Spleen (tissue), 13 donors: ENCODE measurements at regions of chr15 and their contacts with region 1.

Region 1: DNA sequence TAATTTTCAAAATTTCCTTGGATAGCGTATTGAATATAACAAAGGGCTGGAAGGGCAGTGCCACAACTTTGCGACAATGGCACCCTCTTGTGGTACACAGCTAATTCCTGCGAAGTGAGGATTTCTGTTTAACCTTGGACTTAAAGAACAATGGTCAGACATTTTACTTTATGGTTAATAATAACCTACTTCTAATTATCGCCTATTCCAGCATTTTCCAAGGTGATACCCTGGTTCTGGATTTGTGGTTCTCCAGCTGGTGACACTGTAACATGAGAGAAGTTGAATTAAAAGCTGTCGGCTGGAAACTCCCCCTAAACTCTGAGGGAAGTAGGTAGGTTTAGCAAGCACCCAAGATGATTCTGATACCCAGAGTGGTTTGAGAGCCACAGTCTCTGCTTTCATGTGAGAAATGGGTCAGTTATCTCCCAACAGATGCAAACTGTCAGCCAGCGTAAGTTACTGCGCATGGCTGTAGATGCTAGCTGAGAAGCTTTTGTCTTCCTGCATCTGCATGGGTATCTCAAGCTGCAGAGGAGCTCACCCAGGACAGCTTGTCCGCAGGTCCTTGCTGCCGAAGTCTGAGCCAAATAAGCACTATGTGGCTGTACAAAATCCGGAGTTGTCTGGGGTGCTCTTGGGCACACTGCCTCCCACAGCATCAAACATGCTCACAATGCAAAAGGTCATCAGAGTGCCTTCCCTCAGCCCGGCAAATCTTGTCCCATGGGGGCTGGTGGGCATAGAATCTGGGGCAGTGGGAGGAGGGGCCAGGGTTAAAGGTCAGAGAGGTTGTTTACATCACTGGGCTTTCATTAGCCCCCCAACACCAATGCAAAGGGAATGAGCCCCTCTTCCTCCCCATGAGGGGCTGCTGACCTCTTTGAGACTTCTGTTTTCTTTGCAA is 6.6 kb upstream of the CHSY1 start:
- DNase-seq: peak; percentile 75
- H3K4me3 ChIP-seq: no peak overlapping the region
- H3K27ac ChIP-seq: no peak overlapping the region
- H3K4me1 ChIP-seq: peaks cover 0 to 44% (median 23%) of the 10 kb centered on the region in 6 donors
- H3K27me3 ChIP-seq: no peaks in the 10 kb centered on the region
- CTCF ChIP-seq: peak; percentile 70 to 91 (median 85)
- POLR2A ChIP-seq: no peak

Region 2: DNA sequence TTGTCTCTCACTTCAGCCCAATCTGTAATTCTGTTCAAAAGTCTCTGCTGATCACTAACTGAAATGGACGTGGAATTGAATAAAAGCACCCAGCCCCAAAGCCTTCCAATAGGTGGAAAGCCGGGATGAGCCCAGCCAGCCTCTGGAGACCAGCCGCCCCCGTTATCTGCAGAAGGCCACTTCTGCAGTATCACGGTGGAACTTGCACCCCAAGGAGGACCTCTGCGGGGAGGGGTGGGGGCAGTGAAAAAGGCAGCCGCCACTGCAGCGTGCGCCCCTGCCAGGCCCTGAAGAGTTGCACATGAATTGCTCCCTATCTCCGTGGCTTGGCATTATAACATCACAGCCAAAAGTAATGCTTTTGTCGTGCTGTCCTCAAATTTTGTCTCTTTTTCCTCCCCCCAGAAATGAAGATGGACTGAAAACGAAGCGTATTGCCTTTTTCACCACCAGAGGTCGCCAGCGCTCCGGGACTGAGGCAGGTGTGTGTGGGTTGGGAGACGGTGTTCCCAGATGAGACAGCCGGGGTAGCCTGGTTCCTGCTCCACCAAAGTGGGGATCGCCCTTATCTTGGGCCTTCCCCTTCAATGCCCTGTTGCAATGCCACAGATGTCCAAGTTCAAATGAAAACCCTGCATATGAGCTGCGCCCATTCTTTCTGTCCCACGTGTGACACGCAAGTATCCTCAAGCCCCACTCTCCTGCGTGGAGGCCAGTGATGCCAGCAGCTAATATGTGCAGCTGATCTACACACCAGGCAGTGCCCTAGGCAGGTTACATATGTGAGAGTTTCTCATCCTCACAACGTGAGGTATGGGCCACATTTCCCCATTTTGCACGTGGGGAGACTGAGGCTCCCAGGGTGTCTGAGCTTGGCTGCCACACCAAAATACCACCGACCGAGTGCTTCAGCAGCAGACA is 243.3 kb before region 1 on chr15:
- intact Hi-C with region 1: loop called (anchors 2 kb)
- DNase-seq: peak; percentile 92
- H3K4me3 ChIP-seq: no peak overlapping the region
- H3K27ac ChIP-seq: no peak overlapping the region
- H3K4me1 ChIP-seq: peaks cover 4 to 29% (median 21%) of the 10 kb centered on the region in 6 donors
- H3K27me3 ChIP-seq: no peaks in the 10 kb centered on the region
- CTCF ChIP-seq: peak; percentile 73 to 87 (median 83)
- POLR2A ChIP-seq: no peak

Region 3: DNA sequence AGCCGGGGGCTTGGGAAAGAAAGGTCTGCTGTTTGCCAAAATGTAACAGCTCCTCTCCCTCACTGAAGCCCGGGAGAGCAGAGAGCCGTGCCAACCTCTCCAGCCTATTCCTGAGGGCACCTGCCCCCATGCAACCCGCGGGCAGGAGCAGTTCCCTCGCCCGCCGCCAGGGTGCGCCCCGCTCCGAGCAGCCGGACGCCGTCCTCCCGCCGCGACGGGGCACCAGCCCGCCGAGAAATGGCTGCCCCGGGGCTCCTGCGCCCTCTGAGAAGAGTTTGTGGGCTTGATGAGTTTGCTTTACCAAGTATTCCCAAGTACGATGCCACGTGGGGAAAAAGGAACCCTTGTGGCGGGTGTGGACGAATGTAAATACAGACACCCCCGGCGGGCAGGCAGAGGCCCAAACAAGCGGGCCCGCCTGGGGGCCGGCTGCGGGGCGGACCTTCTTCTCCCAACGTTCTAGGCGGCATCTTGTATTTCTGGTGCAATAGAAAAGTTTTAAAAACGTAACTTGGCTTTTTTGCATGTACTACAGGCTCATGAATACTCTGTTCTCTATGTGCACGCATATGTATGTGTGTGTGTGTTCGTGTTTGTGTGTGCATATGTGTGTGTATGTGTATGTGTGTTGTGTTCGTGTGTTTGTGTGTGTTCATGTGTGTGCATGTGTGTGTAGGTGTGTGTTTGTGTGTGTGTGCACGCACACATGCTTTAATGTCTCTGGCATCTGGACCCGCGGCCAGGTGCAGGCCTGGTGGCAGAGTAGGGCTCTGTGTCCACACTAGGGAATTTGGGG is 169.5 kb before region 1 on chr15:
- intact Hi-C with region 1: loop called (anchors 2 kb)
- DNase-seq: peak; percentile 96
- H3K4me3 ChIP-seq: peak overlapping the region in 1 of 8 donors; percentile 51
- H3K27ac ChIP-seq: peak overlapping the region in 6 of 8 donors; percentile 73 to 87 (median 81)
- H3K4me1 ChIP-seq: peaks cover 14 to 60% (median 43%) of the 10 kb centered on the region in 6 donors
- H3K27me3 ChIP-seq: peaks cover 0 to 5% (median 0%) of the 10 kb centered on the region in 7 donors
- CTCF ChIP-seq: peak; percentile 97 to 100 (median 99)
- POLR2A ChIP-seq: no peak

Region 4: DNA sequence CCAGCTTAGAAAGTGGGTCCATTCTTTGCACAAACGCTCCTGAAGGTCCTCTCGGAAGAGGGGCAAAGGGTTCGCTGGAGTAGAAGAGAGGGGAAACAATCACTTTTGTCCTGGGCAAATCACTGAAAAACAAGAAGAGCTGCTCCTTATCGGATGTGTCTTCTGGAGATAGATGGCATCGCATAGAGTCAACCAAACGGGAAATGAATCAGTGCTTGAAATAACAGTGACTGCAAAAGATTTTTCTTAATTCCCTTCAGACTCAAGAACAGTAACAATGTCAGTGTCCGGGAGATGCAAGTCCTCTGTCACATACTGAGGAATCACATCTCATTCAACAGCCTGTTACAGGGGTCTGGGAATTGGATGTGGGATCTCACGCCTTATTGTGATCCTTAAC is 309.8 kb after region 1 on chr15:
- intact Hi-C with region 1: no loop called
- DNase-seq: no peak
- H3K4me3 ChIP-seq: no peak overlapping the region
- H3K27ac ChIP-seq: no peak overlapping the region
- H3K4me1 ChIP-seq: no peaks in the 10 kb centered on the region
- H3K27me3 ChIP-seq: peaks cover 0 to 20% (median 0%) of the 10 kb centered on the region in 7 donors
- CTCF ChIP-seq: no peak
- POLR2A ChIP-seq: no peak